ENCODE measurements at regions of chr20 and their contacts with region 1.

Region 1: DNA sequence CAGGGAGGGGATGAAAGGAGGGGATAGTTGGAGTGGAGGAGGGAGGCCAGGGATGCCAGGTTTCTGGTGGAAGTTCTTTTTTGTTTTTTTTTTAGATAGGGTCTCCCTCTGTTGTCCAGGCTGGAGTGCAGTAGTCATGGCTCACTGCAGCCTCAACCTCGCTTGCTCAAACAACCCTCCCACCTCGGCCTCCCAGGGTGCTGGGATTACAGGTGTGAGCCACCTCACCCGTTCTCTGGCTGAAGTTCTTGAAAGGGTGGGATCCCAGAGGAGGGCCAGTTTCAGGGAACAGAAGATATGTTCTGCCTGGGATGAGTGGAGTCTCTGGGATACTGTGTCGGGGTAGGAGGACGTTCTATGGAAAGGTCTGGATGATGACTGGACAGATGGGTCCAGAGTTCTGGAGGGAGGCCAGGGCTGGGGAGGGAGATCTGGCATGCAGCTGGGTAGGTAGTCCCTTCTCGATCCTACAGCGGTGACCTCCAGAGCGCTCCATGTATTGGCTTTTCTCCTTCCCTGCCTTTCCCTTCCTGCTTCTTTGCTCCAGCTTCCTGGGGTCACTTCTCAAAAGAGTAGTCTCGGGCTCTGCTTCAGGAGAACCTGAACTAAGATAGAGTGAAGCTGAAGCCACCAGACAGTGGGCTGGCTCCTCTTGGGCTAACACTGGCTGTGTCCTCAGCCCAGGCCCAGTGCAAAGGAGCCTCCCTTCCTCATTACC is 12.7 kb upstream of the SRC start:
- DNase-seq: no peak
- H3K27ac ChIP-seq: peak overlapping the region; percentile 96
- CTCF ChIP-seq: no peak

Region 2: DNA sequence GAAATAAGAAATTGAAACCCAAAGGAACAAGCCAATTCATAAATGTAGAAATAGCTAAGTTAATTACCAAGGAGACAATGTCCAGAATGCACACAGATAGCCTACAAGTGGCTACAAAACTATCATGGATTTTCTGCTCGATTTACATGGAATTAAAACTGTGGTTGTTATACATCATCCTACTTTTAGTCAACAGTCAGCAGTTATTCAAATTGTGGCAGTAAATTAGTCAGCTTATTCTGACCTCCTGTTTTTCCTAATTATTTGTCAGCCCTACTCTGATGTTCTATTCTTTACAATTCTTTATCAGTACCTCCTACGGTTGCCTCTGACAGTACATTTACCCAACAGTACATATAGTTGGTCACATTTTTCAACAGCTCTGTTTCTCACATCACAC is 267.1 kb before region 1 on chr20:
- CTCF ChIA-PET with region 1: no interaction called
- POLR2A ChIA-PET with region 1: no interaction called
- DNase-seq: no peak
- H3K27ac ChIP-seq: no peak overlapping the region
- CTCF ChIP-seq: no peak

Region 3: DNA sequence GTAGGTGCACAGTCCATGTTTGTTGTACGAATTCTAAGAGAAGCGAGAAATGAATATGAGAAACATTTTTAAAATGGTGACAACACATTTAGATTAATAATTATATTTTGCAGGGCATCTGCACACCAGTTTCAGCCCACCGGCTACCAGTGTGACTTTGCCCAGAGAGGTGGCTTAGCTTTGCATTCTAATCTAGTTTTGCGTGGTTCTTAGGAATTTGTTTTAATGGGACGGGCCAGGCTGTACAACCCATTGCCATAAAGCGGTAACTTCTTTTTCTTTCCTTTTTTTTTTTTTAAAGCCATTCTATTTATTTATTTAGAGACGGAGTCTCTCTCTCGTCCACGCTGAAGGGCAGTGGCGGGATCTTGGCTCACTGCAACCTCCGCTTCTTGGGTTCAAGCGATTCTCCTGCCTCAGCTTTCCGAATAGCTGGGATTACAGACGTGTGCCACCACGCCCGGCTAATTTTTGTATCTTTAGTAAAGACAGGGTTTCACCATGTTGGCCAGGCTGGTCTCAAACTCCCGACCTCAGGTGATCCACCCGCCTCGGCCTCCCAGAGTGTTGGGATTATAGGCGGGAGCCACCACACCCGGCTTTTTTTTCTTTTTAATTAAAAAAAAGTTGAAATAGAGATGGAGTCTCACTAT is 43.0 kb before region 1 on chr20:
- CTCF ChIA-PET with region 1: interaction called, 5 read pairs
- POLR2A ChIA-PET with region 1: interaction called, 10 read pairs
- DNase-seq: no peak
- H3K27ac ChIP-seq: peak overlapping the region; percentile 92
- CTCF ChIP-seq: no peak

Measured in RWPE1 (cell line).